AG04449 (cell line): ENCODE measurements at regions of chr13 and their contacts with region 1.

Region 1: DNA sequence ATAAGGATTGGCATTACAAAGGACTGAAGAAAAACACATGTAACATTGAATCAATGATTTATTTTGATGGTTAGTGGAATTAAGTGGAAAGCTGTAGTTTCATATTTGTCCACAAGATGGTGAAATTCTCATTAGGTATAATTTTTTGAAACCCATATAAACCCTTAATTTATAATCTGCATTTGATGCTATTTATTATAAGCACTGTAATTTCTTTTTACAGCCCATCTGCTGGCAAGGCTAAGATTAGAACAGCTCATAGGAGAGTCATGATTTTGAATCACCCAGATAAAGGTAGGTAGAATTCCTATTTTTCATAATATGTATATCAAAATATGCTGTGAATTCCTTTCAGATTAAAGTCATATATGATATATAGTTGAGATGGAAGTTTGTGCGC is 62.2 kb downstream of the DNAJC15 start:
- DNase-seq: no peak
- H3K4me3 ChIP-seq: no peak overlapping the region
- CTCF ChIP-seq: no peak

Region 2: DNA sequence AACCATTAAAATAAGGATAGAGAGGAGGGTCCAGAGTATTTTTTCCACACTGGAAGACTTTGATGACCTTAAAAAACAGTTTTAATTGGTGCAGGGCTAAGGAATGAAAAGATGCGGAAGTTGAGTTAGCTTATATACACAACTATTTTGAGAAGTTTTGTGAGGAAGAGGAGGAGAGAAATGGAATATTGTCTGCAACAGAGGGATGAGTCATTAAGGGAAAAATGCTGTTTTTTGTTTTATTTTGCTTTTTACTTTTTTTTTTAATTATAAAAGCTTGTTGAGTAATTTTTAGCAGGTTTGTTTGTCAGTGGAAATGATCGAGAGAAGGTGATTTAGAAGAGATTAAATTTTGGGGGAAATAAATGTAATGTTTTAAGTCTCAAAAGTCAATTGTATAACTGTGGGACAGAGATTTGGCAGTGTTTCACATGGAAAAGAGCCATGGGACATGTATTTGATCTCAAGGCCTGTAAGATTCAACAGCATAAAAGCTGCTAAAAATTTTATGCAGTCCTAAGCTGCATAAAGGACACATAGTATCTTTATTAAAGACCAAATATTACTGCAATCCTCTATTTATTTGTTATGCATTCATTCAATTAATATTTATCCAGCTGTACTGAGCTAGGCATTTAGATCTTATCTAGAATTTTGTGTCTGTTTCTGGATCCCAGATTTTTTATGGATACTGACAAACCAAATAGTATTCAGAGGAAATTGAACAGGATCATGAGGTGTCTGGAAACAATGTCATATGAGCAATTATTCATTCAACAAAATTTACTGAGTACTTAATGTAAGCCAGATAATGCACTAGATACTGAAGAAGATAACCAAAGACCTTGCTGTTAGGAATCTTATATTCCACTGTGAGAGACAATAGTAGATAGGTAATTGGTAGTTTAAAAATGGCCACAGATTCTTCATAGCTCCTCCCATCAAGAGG is 10.5 kb after region 1 on chr13:
- CTCF ChIA-PET with region 1: interaction called, 16 read pairs
- POLR2A ChIA-PET with region 1: no interaction called
- DNase-seq: no peak
- H3K4me3 ChIP-seq: no peak overlapping the region
- CTCF ChIP-seq: no peak

Region 3: GRCh38 chr13:43874504-43875092 is 789.1 kb after region 1 on chr13:
- CTCF ChIA-PET with region 1: interaction called, 14 read pairs
- POLR2A ChIA-PET with region 1: no interaction called
- DNase-seq: no peak
- H3K4me3 ChIP-seq: no peak overlapping the region
- CTCF ChIP-seq: peak; percentile 16